Heart left ventricle (tissue), 16 donors: ENCODE measurements at regions of chr6 and their contacts with region 1.

Region 1: DNA sequence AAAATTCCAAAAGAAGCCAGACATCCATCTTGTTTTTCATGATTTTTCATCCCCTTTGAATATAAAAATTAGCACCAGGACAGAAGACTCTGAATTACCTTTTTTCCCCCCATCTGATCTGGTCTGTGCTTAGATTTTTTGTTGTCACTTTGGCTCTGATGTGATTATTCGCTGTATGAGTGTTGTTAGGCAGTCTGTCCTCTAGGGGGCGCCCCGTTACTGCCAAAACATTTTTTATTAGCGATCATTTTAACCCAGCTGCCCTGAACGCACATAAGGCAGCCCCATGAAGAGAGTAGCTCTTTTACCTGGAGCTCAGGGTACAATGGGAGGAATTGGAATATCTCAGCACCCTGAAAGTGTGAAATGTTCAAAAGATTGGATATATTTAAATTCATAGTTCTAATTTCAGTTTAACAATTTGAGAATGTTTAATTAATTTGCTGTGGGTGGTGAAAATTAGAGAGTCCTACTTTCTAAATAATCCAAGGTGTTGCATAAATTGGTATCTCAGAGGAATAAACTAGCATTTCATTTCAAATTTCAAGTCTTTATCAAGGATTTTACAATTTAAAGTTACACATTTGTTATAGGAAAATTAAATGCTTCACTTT is 60.8 kb downstream of the PRPH2 start:
- DNase-seq: peak; percentile 67 to 82 (median 77)
- ATAC-seq: peak; percentile 64 to 85 (median 77)
- H3K4me3 ChIP-seq: no peak overlapping the region
- H3K27ac ChIP-seq: peak overlapping the region in 1 of 12 donors; percentile 10
- H3K4me1 ChIP-seq: peaks cover 0 to 5% (median 0%) of the 10 kb centered on the region in 12 donors
- H3K27me3 ChIP-seq: no peaks in the 10 kb centered on the region
- CTCF ChIP-seq: peak; percentile 80 to 97 (median 90)
- POLR2A ChIP-seq: no peak

Region 2: DNA sequence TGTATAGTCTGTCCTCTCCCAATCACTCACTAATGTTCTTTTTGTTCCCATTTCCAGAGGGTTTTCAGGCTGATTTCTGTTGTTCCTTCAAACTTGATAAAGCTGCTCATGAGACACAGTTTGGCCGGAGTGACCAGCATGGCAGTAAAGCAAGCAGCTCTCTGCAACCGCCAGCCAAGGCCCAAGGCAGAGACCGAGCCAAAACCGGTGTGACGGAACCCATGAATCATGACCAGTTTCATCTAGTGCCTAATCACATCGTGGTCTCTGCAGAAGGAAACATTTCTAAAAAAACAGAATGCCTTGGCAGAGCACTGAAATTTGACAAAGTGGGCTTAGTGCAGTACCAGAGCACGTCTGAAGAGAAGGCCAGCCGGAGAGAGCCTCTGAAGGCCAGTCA is 203.0 kb after region 1 on chr6:
- intact Hi-C with region 1: loop called in 1 of 10 experiments (anchors 5 kb)
- DNase-seq: no peak
- ATAC-seq: no peak
- H3K4me3 ChIP-seq: no peak overlapping the region
- H3K27ac ChIP-seq: no peak overlapping the region
- H3K4me1 ChIP-seq: no peaks in the 10 kb centered on the region
- H3K27me3 ChIP-seq: no peaks in the 10 kb centered on the region
- CTCF ChIP-seq: no peak
- POLR2A ChIP-seq: no peak

Region 3: GRCh38 chr6:42879372-42880239 is 218.0 kb after region 1 on chr6 and contains the start of gene RPL7L1:
- intact Hi-C with region 1: loop called (anchors 1 to 5 kb)
- DNase-seq: peak; percentile 84 to 91 (median 85)
- ATAC-seq: peak; percentile 98 to 99 (median 98)
- H3K4me3 ChIP-seq: peak within 1 kb of the TSS; percentile 24 to 84 (median 76)
- H3K27ac ChIP-seq: peak within 1 kb of the TSS; percentile 82 to 99 (median 92)
- H3K4me1 ChIP-seq: peaks cover 0 to 34% (median 15%) of the 10 kb centered on the region in 12 donors
- H3K27me3 ChIP-seq: no peaks in the 10 kb centered on the region
- CTCF ChIP-seq: peak in 3 of 12 donors; percentile 7 to 28 (median 21)
- POLR2A ChIP-seq: peak in 1 of 2 donors; percentile 38
- total RNA-seq, gene RPL7L1: 39.8 to 71.1 (median 49.2) TPM

Region 4: GRCh38 chr6:42890311-42891198 is 228.9 kb after region 1 on chr6:
- intact Hi-C with region 1: loop called in 5 of 10 experiments (anchors 5 kb)
- DNase-seq: peak; percentile 94 to 98 (median 94)
- ATAC-seq: peak; percentile 97 to 99 (median 98)
- H3K4me3 ChIP-seq: peak overlapping the region; percentile 72 to 99 (median 88)
- H3K27ac ChIP-seq: peak overlapping the region; percentile 78 to 97 (median 92)
- H3K4me1 ChIP-seq: peaks cover 0 to 25% (median 11%) of the 10 kb centered on the region in 12 donors
- H3K27me3 ChIP-seq: no peaks in the 10 kb centered on the region
- CTCF ChIP-seq: no peak
- POLR2A ChIP-seq: peak in 1 of 2 donors; percentile 71